ENCODE measurements at regions of chr2 and their contacts with region 1.

Region 1: DNA sequence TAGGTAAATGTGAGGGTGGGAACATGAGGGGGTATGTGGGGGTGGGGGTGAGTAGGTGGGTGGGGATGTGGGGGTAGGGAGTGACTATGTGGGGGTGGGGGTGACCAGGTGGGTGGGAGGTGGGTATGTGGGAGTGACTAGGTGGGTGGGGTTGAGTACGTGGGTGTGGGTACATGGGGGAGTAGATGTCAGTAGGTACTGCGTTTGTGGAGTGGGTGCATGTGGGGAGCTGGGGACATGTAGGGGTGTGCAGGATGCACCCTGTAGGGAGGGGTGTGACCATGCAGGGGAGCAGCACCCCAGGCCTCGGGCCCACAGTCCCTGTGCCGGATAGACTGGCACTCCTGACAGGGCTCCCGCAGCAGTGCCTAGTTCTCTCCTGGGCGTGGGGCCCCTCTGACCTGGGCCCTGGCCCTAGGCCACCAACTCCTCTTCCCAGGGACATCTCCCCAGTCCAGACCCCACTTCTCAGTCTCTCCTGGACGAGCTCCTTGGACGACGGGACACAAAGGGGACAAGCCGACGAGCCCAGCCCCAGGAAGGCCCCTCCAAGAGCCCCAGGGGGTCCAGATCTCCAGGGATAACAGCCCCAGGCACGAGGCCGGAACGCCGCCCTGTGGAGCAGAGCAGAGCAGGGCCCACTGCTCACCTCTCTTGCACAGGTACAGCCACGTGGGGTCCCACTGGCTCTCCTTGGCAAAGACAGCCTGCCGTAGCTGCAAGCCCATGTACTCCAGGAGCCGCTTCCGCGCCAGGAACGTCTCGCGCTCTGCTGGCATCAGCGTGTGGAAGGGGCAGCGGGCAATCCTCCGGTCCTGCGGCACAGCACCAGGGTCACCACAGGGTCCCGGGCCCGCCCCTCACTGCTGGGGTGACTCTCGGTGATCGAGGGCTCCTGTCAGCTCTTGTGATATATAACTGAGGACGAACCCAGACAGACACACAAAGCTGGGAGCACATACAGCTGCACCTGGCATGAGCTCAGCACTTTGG is 58.2 kb downstream of the ANKMY1 start:
- DNase-seq: no peak
- ATAC-seq: no peak
- H3K4me3 ChIP-seq: no peak overlapping the region
- H3K27ac ChIP-seq: no peak overlapping the region
- H3K4me1 ChIP-seq: no peaks in the 10 kb centered on the region
- H3K27me3 ChIP-seq: no peaks in the 10 kb centered on the region
- CTCF ChIP-seq: no peak
- POLR2A ChIP-seq: no peak
- RAD21 ChIP-seq: no peak

Region 2: GRCh38 chr2:239882331-239882732 is 617.3 kb before region 1 on chr2:
- CTCF ChIA-PET with region 1: no interaction called
- POLR2A ChIA-PET with region 1: no interaction called
- RAD21 ChIA-PET with region 1: no interaction called
- intact Hi-C with region 1: no loop called
- DNase-seq: peak; percentile 55
- ATAC-seq: peak; percentile 97
- H3K4me3 ChIP-seq: no peak overlapping the region
- H3K27ac ChIP-seq: no peak overlapping the region
- H3K4me1 ChIP-seq: no peaks in the 10 kb centered on the region
- H3K27me3 ChIP-seq: no peaks in the 10 kb centered on the region
- CTCF ChIP-seq: peak; percentile 57 to 77 (median 72); a peak in 5 of 6 replicates
- POLR2A ChIP-seq: no peak
- RAD21 ChIP-seq: peak; percentile 77

Region 3: GRCh38 chr2:240520130-240520973 is 20.7 kb after region 1 on chr2:
- CTCF ChIA-PET with region 1: no interaction called
- POLR2A ChIA-PET with region 1: no interaction called
- RAD21 ChIA-PET with region 1: no interaction called
- intact Hi-C with region 1: no loop called
- DNase-seq: no peak
- ATAC-seq: 0 out of 2 replicates have a peak, but pooled peaks have one; percentile 44
- H3K4me3 ChIP-seq: no peak overlapping the region
- H3K27ac ChIP-seq: no peak overlapping the region
- H3K4me1 ChIP-seq: no peaks in the 10 kb centered on the region
- H3K27me3 ChIP-seq: no peaks in the 10 kb centered on the region
- CTCF ChIP-seq: no peak
- POLR2A ChIP-seq: no peak
- RAD21 ChIP-seq: no peak

Region 4: DNA sequence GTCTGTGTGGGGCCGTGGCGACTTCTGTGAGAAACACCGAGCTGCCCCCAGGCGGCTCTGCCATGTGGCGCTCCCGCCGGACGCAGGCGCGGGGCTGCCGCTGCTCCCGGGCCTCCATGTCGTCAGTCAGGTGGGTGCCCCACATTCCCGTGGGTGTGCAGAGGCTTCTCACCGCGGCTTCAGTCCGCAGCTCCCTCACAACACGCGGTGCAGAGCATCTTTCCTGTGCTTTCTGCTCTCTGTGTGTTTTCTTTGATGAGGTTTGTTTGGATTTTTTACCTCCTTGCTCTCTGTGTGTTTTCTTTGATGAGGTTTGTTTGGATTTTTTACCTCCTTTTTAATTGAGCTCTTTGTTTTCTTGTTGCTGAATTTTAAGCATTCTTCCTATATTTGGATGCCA is 205.0 kb after region 1 on chr2:
- CTCF ChIA-PET with region 1: no interaction called
- POLR2A ChIA-PET with region 1: no interaction called
- RAD21 ChIA-PET with region 1: no interaction called
- intact Hi-C with region 1: loop called (anchors 5 kb)
- DNase-seq: no peak
- ATAC-seq: no peak
- H3K4me3 ChIP-seq: no peak overlapping the region
- H3K27ac ChIP-seq: no peak overlapping the region
- H3K4me1 ChIP-seq: no peaks in the 10 kb centered on the region
- H3K27me3 ChIP-seq: no peaks in the 10 kb centered on the region; the same call in 1 of the 2 replicates
- CTCF ChIP-seq: no peak
- POLR2A ChIP-seq: no peak
- RAD21 ChIP-seq: no peak